Prostate gland (tissue), 2 donors: ENCODE measurements at regions of chr7 and their contacts with region 1.

Region 1: DNA sequence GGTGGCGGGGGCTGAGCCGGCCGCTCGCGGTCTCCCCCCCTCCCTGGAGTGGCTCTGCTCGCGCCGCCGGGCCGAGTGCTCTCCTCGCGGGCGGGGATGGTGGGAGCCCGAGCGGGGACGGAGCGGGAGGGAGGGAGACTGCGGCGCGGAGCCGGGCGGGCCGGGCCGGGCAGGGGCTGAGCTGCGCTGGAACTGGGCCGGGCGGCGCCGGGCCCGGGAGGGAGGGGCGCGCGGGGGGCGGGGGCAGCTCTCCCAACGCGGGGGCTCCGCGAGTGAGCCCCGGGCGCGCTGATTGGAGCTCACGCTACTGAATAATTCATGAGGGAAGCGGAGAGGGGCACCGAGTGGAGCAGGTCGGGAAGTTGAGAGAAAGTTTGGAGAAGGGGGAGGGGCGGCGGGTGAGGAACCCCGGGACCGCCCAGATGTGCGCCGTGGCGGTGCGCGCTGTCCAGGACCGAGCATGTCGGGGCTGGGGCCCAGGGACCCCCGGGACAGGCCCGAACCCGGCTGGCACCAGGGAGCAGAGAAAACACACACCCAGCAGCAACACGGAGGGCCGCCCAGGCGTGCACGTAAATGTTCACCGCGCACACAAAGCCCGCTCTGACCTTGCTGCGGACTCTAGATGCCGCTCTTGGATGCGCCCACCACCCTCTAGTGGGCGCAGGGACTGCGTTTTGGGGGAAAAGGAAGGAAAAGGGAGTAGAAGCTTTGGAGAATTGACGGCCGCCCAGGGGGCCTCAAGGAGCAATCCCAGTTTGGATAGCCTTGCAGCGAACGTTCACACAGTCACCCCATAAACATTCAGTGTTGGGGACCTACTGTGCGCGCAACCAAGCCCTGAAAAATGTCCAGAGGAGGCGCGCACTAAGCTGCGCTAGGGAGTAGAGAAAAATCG is at the start of gene EPHB4:
- DNase-seq: peak; percentile 90
- H3K4me3 ChIP-seq: peak within 1 kb of the TSS; percentile 71 to 76
- H3K27ac ChIP-seq: peak within 1 kb of the TSS; percentile 70 to 85
- H3K4me1 ChIP-seq: peaks cover 8% of the 10 kb centered on the region
- H3K27me3 ChIP-seq: no peaks in the 10 kb centered on the region
- CTCF ChIP-seq: no peak
- POLR2A ChIP-seq: peak; percentile 47
- total RNA-seq, gene EPHB4: 78.6 to 80.8 TPM

Region 2: DNA sequence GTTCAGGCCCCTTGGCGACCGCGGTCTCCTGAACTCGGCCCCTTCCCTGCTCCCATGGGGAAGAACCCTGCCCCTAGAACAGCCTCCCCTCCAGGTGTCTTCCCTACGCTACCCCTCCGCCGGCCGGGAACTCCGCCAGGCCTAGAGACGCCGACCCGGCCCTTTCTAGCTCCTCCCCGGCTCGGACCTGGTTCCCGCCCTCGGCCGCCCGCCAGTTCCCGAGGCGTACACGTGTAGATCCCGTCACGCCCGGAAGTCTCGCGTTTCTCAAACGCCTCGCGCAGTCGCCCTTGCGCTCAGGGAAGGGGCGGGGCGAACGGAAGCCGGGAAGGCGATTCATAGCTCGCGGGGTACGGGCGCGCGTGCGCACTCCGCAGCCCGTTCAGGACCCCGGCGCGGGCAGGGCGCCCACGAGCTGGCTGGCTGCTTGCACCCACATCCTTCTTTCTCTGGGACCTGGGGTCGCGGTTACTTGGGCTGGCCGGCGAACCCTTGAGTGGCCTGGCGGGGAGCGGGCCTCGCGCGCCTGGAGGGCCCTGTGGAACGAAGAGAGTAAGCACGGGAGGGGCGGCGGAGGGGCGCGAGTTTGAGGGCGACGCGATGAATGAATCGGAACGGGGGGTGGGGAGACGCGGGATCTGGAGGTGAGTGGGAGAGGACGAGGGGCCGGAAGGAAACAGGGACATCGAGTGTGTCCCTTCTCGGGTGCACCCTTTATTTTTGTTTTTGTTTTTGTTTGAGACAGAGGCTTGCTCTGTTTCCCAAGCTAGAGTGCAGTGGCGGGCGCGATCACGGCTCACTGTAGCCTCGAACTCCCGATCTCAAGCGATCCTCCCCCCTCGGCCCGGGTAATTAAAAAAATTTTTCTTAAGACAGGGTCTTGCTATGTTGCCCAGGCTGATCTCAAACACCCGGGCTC is 121.6 kb before region 1 on chr7 and contains the start of gene POP7:
- intact Hi-C with region 1: loop called (anchors 5 kb)
- DNase-seq: peak; percentile 98
- H3K4me3 ChIP-seq: peak within 1 kb of the TSS; percentile 75 to 84
- H3K27ac ChIP-seq: peak within 1 kb of the TSS; percentile 94 to 96
- H3K4me1 ChIP-seq: peaks cover 6% of the 10 kb centered on the region
- H3K27me3 ChIP-seq: no peaks in the 10 kb centered on the region
- CTCF ChIP-seq: no peak
- POLR2A ChIP-seq: peak; percentile 68
- total RNA-seq, gene POP7: 41.4 to 45.2 TPM

Region 3: DNA sequence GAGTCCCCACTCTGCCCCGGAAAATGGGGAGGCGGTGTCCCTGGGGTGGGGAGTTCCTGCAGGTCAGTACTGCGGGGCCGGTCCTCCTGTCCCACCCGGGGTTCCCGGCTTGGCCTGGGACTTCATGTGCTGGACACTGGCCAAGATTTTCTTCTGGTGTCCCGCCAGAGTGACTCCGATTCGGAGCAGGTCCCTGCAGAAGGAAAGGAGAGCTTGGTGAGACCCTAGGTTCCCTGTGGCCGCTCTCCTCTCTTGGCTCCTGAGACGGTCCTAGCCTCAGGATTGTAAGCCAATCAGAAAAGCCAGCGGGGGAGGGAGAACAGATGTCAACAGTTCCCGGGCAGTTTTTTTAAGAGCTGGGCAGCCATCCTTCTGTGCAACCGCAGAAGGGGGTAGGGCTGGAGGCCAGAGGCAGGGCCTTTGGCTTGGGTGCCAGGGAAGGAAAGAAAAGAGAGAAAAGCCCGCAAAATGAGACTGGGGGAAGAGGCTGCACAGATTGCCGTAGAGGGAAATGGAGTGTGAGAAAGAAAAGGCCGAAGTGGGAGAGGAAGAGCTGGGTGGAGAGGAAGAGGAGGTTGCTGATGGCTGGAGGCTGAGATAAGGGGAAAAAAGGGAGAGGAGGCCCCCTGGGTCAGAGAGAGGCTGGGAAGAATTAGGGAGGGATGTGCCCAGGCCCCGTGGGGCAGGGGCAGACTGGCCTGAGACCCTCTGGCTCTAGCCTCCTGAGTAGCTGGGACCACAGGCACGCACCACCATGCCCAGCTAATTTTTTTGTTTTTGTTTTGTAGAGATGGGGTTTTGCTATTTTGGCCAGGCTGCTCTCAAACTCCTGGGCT is 24.0 kb before region 1 on chr7:
- intact Hi-C with region 1: loop called (anchors 2 kb)
- DNase-seq: peak; percentile 93
- H3K4me3 ChIP-seq: no peak overlapping the region
- H3K27ac ChIP-seq: peak overlapping the region; percentile 81 to 82
- H3K4me1 ChIP-seq: peaks cover 12% of the 10 kb centered on the region
- H3K27me3 ChIP-seq: no peaks in the 10 kb centered on the region
- CTCF ChIP-seq: no peak
- POLR2A ChIP-seq: peak; percentile 55